B cell (primary cell): ENCODE measurements at regions of chr12 and their contacts with region 1.

Region 1: DNA sequence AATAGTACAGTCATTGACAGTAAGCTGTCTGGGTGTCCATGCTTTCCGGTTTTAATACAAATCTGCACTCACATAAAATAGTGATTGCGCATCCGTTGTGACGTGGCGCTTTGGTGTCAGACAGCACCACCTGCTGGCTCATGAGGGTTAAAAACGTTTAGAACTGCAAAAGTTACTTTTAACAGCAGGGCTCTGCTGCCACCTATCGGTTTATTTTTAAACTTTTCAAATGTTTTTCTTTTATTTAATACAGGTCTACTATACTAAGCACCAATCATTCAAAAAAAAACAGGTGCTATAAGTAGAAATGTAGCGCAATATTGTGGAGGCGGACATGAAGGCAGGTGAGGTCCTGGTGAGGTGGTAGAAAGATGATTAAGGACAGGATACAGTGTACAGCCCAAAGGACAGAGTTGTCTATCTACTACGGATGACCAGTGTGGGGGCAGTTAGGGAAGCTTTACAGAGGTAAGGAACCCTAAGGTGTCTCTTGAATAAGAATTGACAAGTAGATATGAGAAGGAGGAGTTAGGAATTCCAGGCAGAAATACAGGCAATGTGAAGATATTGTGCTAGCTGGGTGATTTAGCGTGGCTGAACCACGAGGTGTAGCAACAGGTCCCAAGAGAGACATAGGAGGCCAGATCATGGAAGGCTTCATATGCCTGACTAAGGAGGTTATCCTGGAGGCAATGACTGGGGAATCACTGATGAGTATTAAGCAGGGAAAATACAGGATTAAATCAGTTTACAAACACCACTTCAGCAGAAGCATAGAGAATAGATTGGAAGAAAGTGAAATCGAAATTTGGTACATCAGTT is 91.5 kb upstream of the PRB2 start:
- DNase-seq: peak; percentile 87
- ATAC-seq: peak; percentile 95
- H3K4me3 ChIP-seq: no peak overlapping the region
- H3K4me3 Mint-ChIP-seq: no peak overlapping the region
- H3K27ac ChIP-seq: no peak overlapping the region
- H3K27ac Mint-ChIP-seq: no peak overlapping the region
- H3K4me1 ChIP-seq: peaks cover 4 to 8% of the 10 kb centered on the region in 2 donors
- H3K4me1 Mint-ChIP-seq: peaks cover 2% of the 10 kb centered on the region
- H3K27me3 ChIP-seq: no peaks in the 10 kb centered on the region
- H3K27me3 Mint-ChIP-seq: peaks cover 31% of the 10 kb centered on the region
- CTCF ChIP-seq: peak; percentile 100

Region 2: GRCh38 chr12:10153271-10154144 is 1333.3 kb before region 1 on chr12:
- CTCF ChIA-PET with region 1: interaction called, 15 read pairs
- POLR2A ChIA-PET with region 1: no interaction called
- intact Hi-C with region 1: no loop called
- DNase-seq: peak; percentile 77
- ATAC-seq: peak; percentile 75
- H3K4me3 ChIP-seq: peak overlapping the region; percentile 32 to 79 (median 68)
- H3K4me3 Mint-ChIP-seq: peak overlapping the region; percentile 92
- H3K27ac ChIP-seq: no peak overlapping the region
- H3K27ac Mint-ChIP-seq: no peak overlapping the region
- H3K4me1 ChIP-seq: peaks cover 12 to 14% of the 10 kb centered on the region in 2 donors
- H3K4me1 Mint-ChIP-seq: peaks cover 17% of the 10 kb centered on the region
- H3K27me3 ChIP-seq: peaks cover 0 to 16% (median 12%) of the 10 kb centered on the region in 4 experiments
- H3K27me3 Mint-ChIP-seq: peaks cover 31% of the 10 kb centered on the region
- CTCF ChIP-seq: peak; percentile 95

Region 3: DNA sequence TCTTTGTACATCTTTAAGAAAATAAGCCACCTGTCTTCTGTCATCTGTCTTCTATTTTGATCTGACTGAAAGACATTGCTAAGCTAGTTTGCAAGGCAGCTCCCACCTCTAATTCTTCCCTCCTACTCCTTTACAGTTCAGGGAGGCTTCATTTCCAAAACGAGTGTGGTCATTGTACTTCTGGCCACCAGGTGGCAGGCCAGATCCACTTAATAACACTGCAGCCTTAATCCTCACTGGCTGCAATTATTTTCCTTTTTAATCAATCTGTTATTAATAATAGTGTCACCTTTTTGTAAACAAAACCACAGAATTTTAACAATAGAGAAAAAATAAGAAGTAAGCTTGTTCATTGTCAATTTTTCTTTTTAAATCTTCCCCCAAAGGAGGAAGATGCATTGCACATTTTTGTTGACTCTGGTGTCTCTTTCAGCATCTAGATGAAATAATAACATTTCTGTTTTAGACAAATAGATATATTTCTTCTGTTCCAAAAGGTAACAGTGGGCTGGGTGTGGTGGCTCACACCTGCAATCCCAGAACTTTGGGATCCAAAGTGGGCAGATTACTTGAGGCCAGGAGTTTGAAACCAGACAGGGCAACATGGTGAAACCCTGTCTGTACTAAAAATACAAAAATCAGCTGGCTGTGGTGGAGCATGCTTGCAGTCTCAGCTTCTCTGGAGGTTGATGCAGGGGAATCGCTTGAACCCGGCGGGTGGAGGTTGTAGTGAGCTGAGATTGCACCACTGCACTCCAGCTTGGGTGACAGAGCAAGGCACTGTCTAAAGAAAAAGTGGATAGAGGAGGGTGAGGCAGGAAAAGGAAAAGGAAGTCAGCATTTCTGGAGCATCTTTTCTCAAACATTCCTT is 1250.8 kb before region 1 on chr12:
- CTCF ChIA-PET with region 1: interaction called, 17 read pairs
- POLR2A ChIA-PET with region 1: no interaction called
- intact Hi-C with region 1: no loop called
- DNase-seq: peak; percentile 67
- ATAC-seq: peak; percentile 62
- H3K4me3 ChIP-seq: no peak overlapping the region
- H3K4me3 Mint-ChIP-seq: no peak overlapping the region
- H3K27ac ChIP-seq: no peak overlapping the region
- H3K27ac Mint-ChIP-seq: no peak overlapping the region
- H3K4me1 ChIP-seq: no peaks in the 10 kb centered on the region
- H3K4me1 Mint-ChIP-seq: no peaks in the 10 kb centered on the region
- H3K27me3 ChIP-seq: peaks cover 0 to 7% (median 2%) of the 10 kb centered on the region in 4 experiments
- H3K27me3 Mint-ChIP-seq: peaks cover 8% of the 10 kb centered on the region
- CTCF ChIP-seq: peak; percentile 94

Region 4: DNA sequence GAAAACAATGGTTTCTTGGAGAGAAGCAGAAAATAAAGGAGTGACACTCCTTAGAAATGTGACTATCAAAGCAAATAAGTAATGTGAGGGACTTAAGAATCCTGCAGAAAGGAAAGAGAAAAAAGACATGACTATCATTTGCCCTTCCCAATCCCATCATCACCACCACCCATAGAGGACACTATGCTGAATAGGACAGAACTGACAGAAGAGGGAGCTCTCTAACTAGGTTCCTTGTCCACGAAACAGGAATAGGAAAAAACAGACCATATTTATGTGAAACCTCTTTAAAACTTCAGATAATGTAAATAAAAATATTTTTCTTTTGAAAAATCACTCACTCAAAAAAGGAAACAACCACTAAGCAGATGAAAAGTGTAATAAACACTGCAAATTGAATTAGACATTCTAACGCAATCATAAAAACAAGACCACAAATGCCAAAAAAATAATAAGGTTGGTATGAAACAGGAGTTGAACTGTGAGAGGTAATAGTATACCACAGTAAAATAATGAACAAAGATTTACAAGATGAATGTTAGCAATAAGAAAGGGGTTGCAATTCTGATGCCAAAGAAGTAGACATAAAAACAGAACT is 1155.1 kb before region 1 on chr12:
- CTCF ChIA-PET with region 1: no interaction called
- POLR2A ChIA-PET with region 1: no interaction called
- intact Hi-C with region 1: loop called (anchors 5 kb)
- DNase-seq: peak; percentile 66
- ATAC-seq: peak; percentile 33
- H3K4me3 ChIP-seq: no peak overlapping the region
- H3K4me3 Mint-ChIP-seq: no peak overlapping the region
- H3K27ac ChIP-seq: no peak overlapping the region
- H3K27ac Mint-ChIP-seq: no peak overlapping the region
- H3K4me1 ChIP-seq: no peaks in the 10 kb centered on the region
- H3K4me1 Mint-ChIP-seq: no peaks in the 10 kb centered on the region
- H3K27me3 ChIP-seq: no peaks in the 10 kb centered on the region
- H3K27me3 Mint-ChIP-seq: no peaks in the 10 kb centered on the region
- CTCF ChIP-seq: peak; percentile 68

Region 5: DNA sequence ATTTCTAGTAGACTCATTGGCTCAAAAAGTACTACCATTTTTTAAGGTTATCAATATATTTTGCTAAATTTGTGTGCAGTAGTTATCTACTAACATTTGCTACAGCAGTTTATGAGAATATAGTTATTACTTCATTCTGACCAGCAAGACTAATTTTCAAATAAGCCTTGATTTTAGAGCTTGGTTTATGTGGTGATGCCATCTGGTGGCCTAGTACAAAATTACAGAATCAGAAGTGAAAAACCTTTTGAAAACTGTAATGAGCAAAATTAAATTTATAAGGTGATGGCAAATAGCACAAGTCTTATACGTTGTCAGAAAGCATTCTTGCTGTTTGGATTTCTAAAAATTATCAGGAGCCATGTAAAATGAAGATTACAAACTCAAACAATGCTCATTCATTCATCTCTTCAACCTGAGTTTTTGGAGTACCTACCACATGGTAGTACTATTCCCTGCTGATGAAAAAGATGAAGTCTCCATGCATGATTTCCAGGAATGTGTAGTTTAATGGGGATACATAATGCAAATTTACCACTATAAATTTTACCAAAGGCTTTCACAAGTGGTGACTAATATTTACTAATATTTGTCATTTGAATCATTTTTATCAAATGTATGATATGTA is 924.4 kb before region 1 on chr12:
- CTCF ChIA-PET with region 1: no interaction called
- POLR2A ChIA-PET with region 1: no interaction called
- intact Hi-C with region 1: loop called (anchors 5 kb)
- DNase-seq: peak; percentile 69
- ATAC-seq: no peak
- H3K4me3 ChIP-seq: no peak overlapping the region
- H3K4me3 Mint-ChIP-seq: no peak overlapping the region
- H3K27ac ChIP-seq: no peak overlapping the region
- H3K27ac Mint-ChIP-seq: no peak overlapping the region
- H3K4me1 ChIP-seq: no peaks in the 10 kb centered on the region
- H3K4me1 Mint-ChIP-seq: no peaks in the 10 kb centered on the region
- H3K27me3 ChIP-seq: no peaks in the 10 kb centered on the region
- H3K27me3 Mint-ChIP-seq: peaks cover 22% of the 10 kb centered on the region
- CTCF ChIP-seq: peak; percentile 89

Region 6: DNA sequence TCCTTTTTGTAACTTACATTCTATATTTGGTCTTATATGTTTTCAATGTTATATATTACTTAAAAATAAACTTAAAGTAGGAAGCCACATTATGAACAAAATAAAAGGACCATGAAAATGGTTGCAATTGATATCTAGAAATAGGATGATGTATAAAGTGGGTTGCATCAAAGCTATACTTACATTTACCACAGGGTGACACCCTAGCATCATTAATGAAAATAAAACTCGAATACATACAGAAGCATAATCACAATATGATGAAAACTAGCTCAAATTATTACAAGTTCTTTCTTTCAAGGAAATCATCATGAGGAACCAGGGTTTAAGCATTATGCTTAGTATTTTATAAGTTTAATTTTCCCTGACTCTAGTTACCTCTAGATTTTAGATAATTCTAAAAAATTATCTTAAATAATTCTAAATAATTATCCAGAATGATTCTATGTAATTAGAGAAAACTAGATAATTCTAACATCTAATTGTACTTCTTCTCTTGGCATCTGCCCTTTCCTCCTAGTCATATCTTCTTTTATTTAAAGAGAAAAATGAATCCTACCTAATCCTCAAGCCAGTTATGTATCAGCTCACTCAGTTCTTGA is 715.6 kb before region 1 on chr12:
- CTCF ChIA-PET with region 1: interaction called, 91 read pairs
- POLR2A ChIA-PET with region 1: no interaction called
- intact Hi-C with region 1: loop called (anchors 1 kb)
- DNase-seq: peak; percentile 53
- ATAC-seq: no peak
- H3K4me3 ChIP-seq: no peak overlapping the region
- H3K4me3 Mint-ChIP-seq: no peak overlapping the region
- H3K27ac ChIP-seq: no peak overlapping the region
- H3K27ac Mint-ChIP-seq: no peak overlapping the region
- H3K4me1 ChIP-seq: no peaks in the 10 kb centered on the region
- H3K4me1 Mint-ChIP-seq: no peaks in the 10 kb centered on the region
- H3K27me3 ChIP-seq: peaks cover 0 to 26% (median 3%) of the 10 kb centered on the region in 4 experiments
- H3K27me3 Mint-ChIP-seq: peaks cover 41% of the 10 kb centered on the region
- CTCF ChIP-seq: peak; percentile 77

Region 7: GRCh38 chr12:11136075-11136474 is 350.8 kb before region 1 on chr12:
- CTCF ChIA-PET with region 1: no interaction called
- POLR2A ChIA-PET with region 1: no interaction called
- intact Hi-C with region 1: no loop called
- DNase-seq: no peak
- ATAC-seq: no peak
- H3K4me3 ChIP-seq: no peak overlapping the region
- H3K4me3 Mint-ChIP-seq: no peak overlapping the region
- H3K27ac ChIP-seq: no peak overlapping the region
- H3K27ac Mint-ChIP-seq: no peak overlapping the region
- H3K4me1 ChIP-seq: no peaks in the 10 kb centered on the region
- H3K4me1 Mint-ChIP-seq: peaks cover 14% of the 10 kb centered on the region
- H3K27me3 ChIP-seq: no peaks in the 10 kb centered on the region
- H3K27me3 Mint-ChIP-seq: no peaks in the 10 kb centered on the region
- CTCF ChIP-seq: no peak

Region 8: DNA sequence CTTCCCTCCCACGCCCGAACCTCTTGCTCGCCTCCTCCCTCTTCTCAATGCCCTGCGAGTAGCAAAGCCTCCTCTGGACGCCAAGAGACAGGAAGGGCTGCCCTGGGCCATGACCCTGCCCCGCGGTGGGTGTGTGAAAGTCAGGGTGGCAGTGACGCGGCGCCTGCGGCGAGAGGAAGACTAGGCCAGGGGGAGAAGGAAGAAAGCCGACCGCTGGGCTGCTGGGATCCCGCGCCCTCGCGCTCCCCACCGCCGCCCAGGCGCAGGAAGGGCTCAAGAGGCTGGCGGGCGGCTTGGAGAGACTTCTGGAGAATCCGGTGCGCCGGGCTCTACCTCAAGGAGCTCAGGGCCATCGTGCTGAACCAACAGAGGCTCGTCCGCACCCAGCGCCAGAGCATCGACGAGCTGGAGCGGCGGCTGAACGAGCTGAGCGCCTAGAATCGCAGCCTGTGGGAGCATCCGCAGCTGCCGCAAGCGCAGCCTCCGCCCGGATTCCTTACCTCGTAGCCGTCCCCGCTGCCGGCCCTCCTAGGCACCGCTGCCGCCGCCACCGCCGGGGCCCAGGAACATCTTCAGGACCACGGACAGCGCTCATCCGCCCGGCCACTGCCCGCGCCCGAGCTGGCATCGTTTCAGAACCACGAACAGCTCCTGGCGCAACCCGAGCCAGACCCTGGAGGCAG is 13.5 kb after region 1 on chr12:
- CTCF ChIA-PET with region 1: interaction called, 4 read pairs
- POLR2A ChIA-PET with region 1: no interaction called
- intact Hi-C with region 1: loop called (anchors 1 kb)
- DNase-seq: peak; percentile 81
- ATAC-seq: peak; percentile 74
- H3K4me3 ChIP-seq: no peak overlapping the region
- H3K4me3 Mint-ChIP-seq: no peak overlapping the region
- H3K27ac ChIP-seq: no peak overlapping the region
- H3K27ac Mint-ChIP-seq: no peak overlapping the region
- H3K4me1 ChIP-seq: peaks cover 23 to 26% of the 10 kb centered on the region in 2 donors
- H3K4me1 Mint-ChIP-seq: peaks cover 21% of the 10 kb centered on the region
- H3K27me3 ChIP-seq: peaks cover 0 to 34% (median 15%) of the 10 kb centered on the region in 4 experiments
- H3K27me3 Mint-ChIP-seq: peaks cover 46% of the 10 kb centered on the region
- CTCF ChIP-seq: no peak

Region 9: GRCh38 chr12:11545484-11546330 is 58.9 kb after region 1 on chr12:
- CTCF ChIA-PET with region 1: no interaction called
- POLR2A ChIA-PET with region 1: no interaction called
- intact Hi-C with region 1: no loop called
- DNase-seq: peak; percentile 48
- ATAC-seq: peak; percentile 73
- H3K4me3 ChIP-seq: peak overlapping the region in 2 of 5 experiments; percentile 15 to 23
- H3K4me3 Mint-ChIP-seq: peak overlapping the region; percentile 63
- H3K27ac ChIP-seq: peak overlapping the region; percentile 71 to 83
- H3K27ac Mint-ChIP-seq: peak overlapping the region; percentile 82
- H3K4me1 ChIP-seq: peaks cover 17 to 21% of the 10 kb centered on the region in 2 donors
- H3K4me1 Mint-ChIP-seq: peaks cover 15% of the 10 kb centered on the region
- H3K27me3 ChIP-seq: no peaks in the 10 kb centered on the region
- H3K27me3 Mint-ChIP-seq: peaks cover 5% of the 10 kb centered on the region
- CTCF ChIP-seq: no peak